ENCODE measurements at regions of chr18 and their contacts with region 1.

Region 1: DNA sequence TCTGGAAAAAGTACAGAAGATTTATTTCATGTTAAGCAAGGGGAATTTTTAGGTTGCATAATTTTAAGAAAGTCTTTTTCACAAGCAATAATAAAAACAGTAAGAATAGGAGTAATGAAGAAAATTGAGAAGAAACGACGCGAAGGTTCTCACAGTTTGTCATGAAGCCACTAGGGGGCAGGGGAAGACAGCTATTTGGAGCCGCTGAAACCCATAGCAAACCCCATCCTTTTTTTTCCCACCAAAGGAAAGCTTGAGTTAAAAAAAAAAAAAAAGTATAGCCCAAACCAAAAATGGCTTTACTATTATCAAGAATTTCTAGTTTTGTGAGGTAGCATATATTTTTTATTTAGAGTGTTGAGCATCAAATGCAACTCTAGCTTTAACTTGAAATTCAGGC is 300.9 kb downstream of the PHLPP1 start:
- DNase-seq: peak; percentile 73

Region 2: GRCh38 chr18:62714671-62715435 is 301.4 kb before region 1 on chr18:
- in situ Hi-C with region 1: no loop called
- DNase-seq: peak; percentile 99

Region 3: GRCh38 chr18:63339920-63340484 is 323.7 kb after region 1 on chr18:
- in situ Hi-C with region 1: loop called (anchors 25 kb)
- DNase-seq: peak; percentile 72